SK-N-SH (cell line): ENCODE measurements at regions of chr3 and their contacts with region 1.

Region 1: GRCh38 chr3:142828703-142829305 is 60.1 kb downstream of the PCOLCE2 start:
- DNase-seq: peak; percentile 64
- H3K4me3 ChIP-seq: peak overlapping the region in 1 of 2 experiments; percentile 38; a peak in 1 of 4 replicates
- H3K27ac ChIP-seq: no peak overlapping the region
- H3K4me1 ChIP-seq: no peaks in the 10 kb centered on the region
- H3K27me3 ChIP-seq: no peaks in the 10 kb centered on the region
- CTCF ChIP-seq: peak; percentile 93
- EP300 ChIP-seq: no peak
- RAD21 ChIP-seq: peak; percentile 97

Region 2: GRCh38 chr3:142586803-142587406 is 241.9 kb before region 1 on chr3:
- CTCF ChIA-PET with region 1: interaction called, 30 read pairs
- POLR2A ChIA-PET with region 1: no interaction called
- DNase-seq: peak; percentile 64
- H3K4me3 ChIP-seq: no peak overlapping the region
- H3K27ac ChIP-seq: no peak overlapping the region
- H3K4me1 ChIP-seq: no peaks in the 10 kb centered on the region
- H3K27me3 ChIP-seq: no peaks in the 10 kb centered on the region
- CTCF ChIP-seq: peak; percentile 76
- EP300 ChIP-seq: no peak
- RAD21 ChIP-seq: peak; percentile 89

Region 3: DNA sequence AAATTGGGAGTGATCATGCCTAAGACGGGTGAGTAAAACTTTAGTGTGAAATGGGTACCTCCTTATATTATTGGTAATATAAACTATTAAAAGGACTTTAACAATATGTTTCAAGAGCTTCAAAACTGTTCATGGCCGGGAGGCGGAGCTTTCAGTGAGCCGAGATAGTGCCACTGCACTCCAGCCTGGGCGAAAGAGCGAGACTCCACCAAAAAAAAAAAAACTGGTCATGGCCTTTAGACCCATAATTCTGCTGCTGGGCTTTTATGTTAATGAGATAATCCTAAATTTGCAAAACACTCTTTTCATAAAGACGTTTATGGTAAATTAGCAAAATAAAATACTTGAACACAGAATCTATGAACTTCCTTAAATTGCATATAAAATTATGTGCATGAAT is 82.2 kb before region 1 on chr3:
- CTCF ChIA-PET with region 1: no interaction called
- POLR2A ChIA-PET with region 1: no interaction called
- DNase-seq: no peak
- H3K4me3 ChIP-seq: no peak overlapping the region
- H3K27ac ChIP-seq: no peak overlapping the region
- H3K4me1 ChIP-seq: no peaks in the 10 kb centered on the region
- H3K27me3 ChIP-seq: no peaks in the 10 kb centered on the region
- CTCF ChIP-seq: no peak
- EP300 ChIP-seq: no peak
- RAD21 ChIP-seq: no peak

Region 4: DNA sequence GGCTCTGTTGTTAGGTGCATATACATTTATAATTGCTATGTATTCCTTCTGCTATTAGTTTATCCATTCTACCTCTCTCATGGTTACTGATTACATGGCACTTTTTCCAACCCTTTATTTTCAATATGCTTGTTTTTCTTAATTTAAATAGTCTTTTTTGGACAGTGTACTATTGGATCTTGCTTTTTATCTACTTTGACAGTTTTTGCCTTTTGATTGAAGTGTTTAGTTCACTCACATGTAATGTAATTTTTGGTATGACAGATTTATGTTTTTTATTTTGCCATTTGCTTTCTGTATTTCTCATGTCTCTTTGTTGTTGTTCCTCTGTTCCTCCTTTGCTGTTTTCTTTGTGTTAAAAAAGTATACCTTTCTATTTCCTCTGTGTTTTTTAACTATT is 60.5 kb before region 1 on chr3:
- CTCF ChIA-PET with region 1: no interaction called
- POLR2A ChIA-PET with region 1: no interaction called
- DNase-seq: no peak
- H3K4me3 ChIP-seq: no peak overlapping the region
- H3K27ac ChIP-seq: no peak overlapping the region
- H3K4me1 ChIP-seq: no peaks in the 10 kb centered on the region
- H3K27me3 ChIP-seq: no peaks in the 10 kb centered on the region
- CTCF ChIP-seq: no peak
- EP300 ChIP-seq: no peak
- RAD21 ChIP-seq: no peak

Region 5: GRCh38 chr3:142817897-142818296 is 10.9 kb before region 1 on chr3:
- CTCF ChIA-PET with region 1: interaction called, 25 read pairs
- POLR2A ChIA-PET with region 1: no interaction called
- DNase-seq: no peak
- H3K4me3 ChIP-seq: no peak overlapping the region
- H3K27ac ChIP-seq: no peak overlapping the region
- H3K4me1 ChIP-seq: no peaks in the 10 kb centered on the region
- H3K27me3 ChIP-seq: no peaks in the 10 kb centered on the region
- CTCF ChIP-seq: no peak
- EP300 ChIP-seq: no peak
- RAD21 ChIP-seq: no peak

Region 6: GRCh38 chr3:142850386-142851023 is 21.7 kb after region 1 on chr3:
- CTCF ChIA-PET with region 1: interaction called, 22 read pairs
- POLR2A ChIA-PET with region 1: no interaction called
- DNase-seq: no peak
- H3K4me3 ChIP-seq: no peak overlapping the region
- H3K27ac ChIP-seq: peak overlapping the region in 1 of 2 experiments; percentile 4; a peak in 2 of 4 replicates
- H3K4me1 ChIP-seq: peaks cover 0 to 29% of the 10 kb centered on the region in 2 experiments; a peak in 2 of 4 replicates
- H3K27me3 ChIP-seq: no peaks in the 10 kb centered on the region
- CTCF ChIP-seq: no peak
- EP300 ChIP-seq: peak in 1 of 2 experiments; percentile 45; a peak in 1 of 4 replicates
- RAD21 ChIP-seq: no peak

Region 7: DNA sequence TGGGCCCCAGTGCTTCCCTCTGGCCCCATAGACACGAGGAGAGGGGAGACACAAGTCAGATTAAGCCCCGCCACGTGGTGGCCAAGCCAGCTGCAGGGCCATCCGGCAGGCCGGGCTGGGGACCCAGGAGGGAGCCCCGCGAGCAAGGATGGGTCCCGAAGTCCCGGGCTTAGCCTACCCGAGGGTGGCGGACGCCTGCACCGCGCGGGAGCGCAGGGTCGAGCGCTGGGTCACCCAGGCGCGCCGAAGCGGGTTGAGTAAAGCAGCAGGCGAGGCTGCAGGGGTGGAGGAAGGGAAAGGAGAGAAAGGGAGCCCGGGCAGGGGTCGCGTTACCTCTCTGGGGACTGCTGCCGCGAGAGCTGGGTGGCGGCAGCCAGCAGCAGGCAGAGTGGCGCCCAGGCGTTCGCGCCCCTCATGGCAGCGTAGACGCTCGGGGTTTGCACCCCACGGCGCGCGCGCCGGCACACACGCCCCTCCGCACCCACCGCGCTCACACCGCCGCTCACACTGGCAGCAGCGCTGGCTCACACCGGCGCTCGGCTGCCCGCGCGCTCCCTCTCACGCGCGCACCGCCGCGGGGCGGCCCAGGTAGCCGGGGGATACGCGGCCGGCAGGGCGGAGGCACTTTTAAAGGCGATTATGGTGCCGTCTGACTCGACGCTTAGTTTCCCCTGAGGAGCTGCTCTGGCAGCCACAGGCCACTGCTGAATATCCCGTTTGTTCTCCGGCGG is 59.8 kb after region 1 on chr3 and contains the start of gene PCOLCE2:
- CTCF ChIA-PET with region 1: interaction called, 10 read pairs
- POLR2A ChIA-PET with region 1: no interaction called
- DNase-seq: peak; percentile 73
- H3K4me3 ChIP-seq: peak within 1 kb of the TSS; percentile 61 to 66
- H3K27ac ChIP-seq: peak within 1 kb of the TSS in 1 of 2 experiments; percentile 68; a peak in 2 of 4 replicates
- H3K4me1 ChIP-seq: peaks cover 0 to 14% of the 10 kb centered on the region in 2 experiments; a peak in 2 of 4 replicates
- H3K27me3 ChIP-seq: no peaks in the 10 kb centered on the region
- CTCF ChIP-seq: no peak
- EP300 ChIP-seq: no peak
- RAD21 ChIP-seq: no peak
- polyA plus RNA-seq, gene PCOLCE2: 22.2 and 25.4 TPM in 2 replicates

Region 8: DNA sequence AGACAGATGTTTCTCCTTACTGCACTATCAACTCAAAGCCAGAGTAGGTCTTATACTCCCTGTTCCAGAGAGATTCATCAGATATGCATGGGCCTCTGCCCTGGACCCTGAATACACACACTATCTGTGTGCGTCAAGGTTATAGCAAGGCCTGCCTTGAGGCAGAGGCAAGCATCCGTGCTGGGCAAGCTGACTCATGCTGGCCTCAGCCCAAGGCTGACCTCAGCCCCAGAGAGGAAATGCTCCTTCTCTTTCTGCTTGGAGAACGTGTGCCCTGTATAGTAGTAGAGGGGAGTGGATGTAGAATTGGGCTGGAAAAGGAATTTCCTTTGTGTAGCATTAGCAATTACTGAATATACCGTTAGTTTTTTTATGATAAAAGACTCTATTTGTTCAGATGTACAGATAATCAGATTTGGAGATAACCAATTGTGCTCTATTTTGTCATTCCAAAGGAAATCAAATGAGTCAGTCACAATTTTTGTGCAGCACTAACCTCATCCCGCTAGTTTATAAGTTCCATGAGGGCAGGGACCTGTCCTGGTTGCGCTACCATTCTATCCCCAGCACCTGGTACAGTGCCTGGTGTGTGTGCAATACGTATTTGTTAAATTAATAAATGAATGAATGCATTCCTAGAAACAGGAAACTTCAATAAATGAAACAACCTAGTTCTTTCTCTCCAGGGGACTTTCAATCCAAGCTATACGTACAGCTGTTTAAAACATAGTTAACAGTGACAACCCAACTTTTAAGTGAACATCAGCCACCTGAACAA is 148.0 kb after region 1 on chr3:
- CTCF ChIA-PET with region 1: interaction called, 19 read pairs
- POLR2A ChIA-PET with region 1: no interaction called
- DNase-seq: peak; percentile 66
- H3K4me3 ChIP-seq: no peak overlapping the region
- H3K27ac ChIP-seq: peak overlapping the region; percentile 55 to 74
- H3K4me1 ChIP-seq: peaks cover 3 to 9% of the 10 kb centered on the region in 2 experiments; a peak in 3 of 4 replicates
- H3K27me3 ChIP-seq: no peaks in the 10 kb centered on the region
- CTCF ChIP-seq: no peak
- EP300 ChIP-seq: peak; percentile 25 to 65; a peak in 2 of 4 replicates
- RAD21 ChIP-seq: no peak

Region 9: GRCh38 chr3:142993958-142994442 is 165.2 kb after region 1 on chr3:
- CTCF ChIA-PET with region 1: interaction called, 88 read pairs
- POLR2A ChIA-PET with region 1: no interaction called
- DNase-seq: peak; percentile 69
- H3K4me3 ChIP-seq: no peak overlapping the region
- H3K27ac ChIP-seq: no peak overlapping the region
- H3K4me1 ChIP-seq: peaks cover 0 to 11% of the 10 kb centered on the region in 2 experiments; a peak in 1 of 4 replicates
- H3K27me3 ChIP-seq: no peaks in the 10 kb centered on the region
- CTCF ChIP-seq: peak; percentile 84
- EP300 ChIP-seq: no peak
- RAD21 ChIP-seq: peak; percentile 88